Activated CD4-positive, alpha-beta T cell treated with anti-CD3 and anti-CD28 coated beads for 36 hours (primary cell): ENCODE measurements at regions of chr2 and their contacts with region 1.

Region 1: GRCh38 chr2:27428213-27428977 is at the start of gene NRBP1:
- DNase-seq: peak; percentile 97
- ATAC-seq: peak; percentile 85
- H3K4me3 Mint-ChIP-seq: peak within 1 kb of the TSS; percentile 100
- H3K27ac Mint-ChIP-seq: peak within 1 kb of the TSS; percentile 98
- H3K4me1 Mint-ChIP-seq: peaks cover 37% of the 10 kb centered on the region
- H3K27me3 Mint-ChIP-seq: no peaks in the 10 kb centered on the region
- total RNA-seq, gene NRBP1: 74.3 to 74.4 TPM

Region 2: GRCh38 chr2:27380626-27381545 is 47.5 kb before region 1 on chr2 and contains the start of gene ZNF513:
- CTCF ChIA-PET with region 1: interaction called, 9 read pairs
- POLR2A ChIA-PET with region 1: interaction called, 3 read pairs
- intact Hi-C with region 1: loop called in 1 of 2 experiments (anchors 1 kb)
- DNase-seq: peak; percentile 95
- ATAC-seq: peak; percentile 91
- H3K4me3 Mint-ChIP-seq: peak within 1 kb of the TSS; percentile 89
- H3K27ac Mint-ChIP-seq: peak within 1 kb of the TSS; percentile 96
- H3K4me1 Mint-ChIP-seq: peaks cover 29% of the 10 kb centered on the region
- H3K27me3 Mint-ChIP-seq: no peaks in the 10 kb centered on the region
- total RNA-seq, gene ZNF513: 7.7 to 10.5 TPM

Region 3: GRCh38 chr2:27628767-27629709 is 200.6 kb after region 1 on chr2 and contains the starts of genes CCDC121 and GPN1:
- CTCF ChIA-PET with region 1: interaction called, 6 read pairs
- POLR2A ChIA-PET with region 1: no interaction called
- intact Hi-C with region 1: loop called (anchors 1 to 2 kb)
- DNase-seq: peak; percentile 98
- ATAC-seq: peak; percentile 96
- H3K4me3 Mint-ChIP-seq: no peak within 1 kb of the TSS
- H3K27ac Mint-ChIP-seq: no peak within 1 kb of the TSS
- H3K4me1 Mint-ChIP-seq: peaks cover 37% of the 10 kb centered on the region
- H3K27me3 Mint-ChIP-seq: no peaks in the 10 kb centered on the region
- total RNA-seq, gene CCDC121: 0.11 to 0.44 TPM
- total RNA-seq, gene GPN1: 45.6 to 63.9 TPM

Region 4: DNA sequence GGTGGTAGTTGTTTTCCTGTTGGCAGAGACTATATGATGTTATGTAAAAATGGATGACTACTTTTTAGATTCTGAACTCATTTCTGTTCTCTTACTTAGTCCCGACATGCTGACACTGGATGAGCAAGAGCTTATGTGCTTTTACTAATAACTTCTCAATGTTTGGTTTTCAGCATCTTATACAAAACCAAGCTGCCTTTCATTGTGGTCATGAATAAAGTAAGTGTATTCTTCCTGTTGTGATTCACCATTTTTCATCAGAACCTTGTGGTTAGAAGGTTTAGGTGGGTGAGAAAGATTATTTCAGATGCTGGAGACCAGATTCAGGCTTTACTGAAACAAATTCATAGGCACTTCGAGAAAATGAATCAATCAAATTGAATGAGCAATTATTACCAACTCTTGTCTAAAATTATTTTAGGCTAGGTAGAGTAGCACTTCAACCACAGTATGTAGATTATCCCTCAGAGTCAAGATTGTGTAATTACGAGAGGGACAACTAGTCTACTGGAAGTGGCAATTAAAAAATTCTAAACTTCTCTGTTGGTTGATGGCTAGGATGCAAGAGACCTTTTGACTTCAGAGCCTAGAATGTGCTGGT is 209.7 kb after region 1 on chr2:
- CTCF ChIA-PET with region 1: no interaction called
- POLR2A ChIA-PET with region 1: no interaction called
- intact Hi-C with region 1: loop called in 1 of 2 experiments (anchors 2 kb)
- DNase-seq: peak; percentile 31
- ATAC-seq: peak; percentile 88
- H3K4me3 Mint-ChIP-seq: peak overlapping the region; percentile 50
- H3K27ac Mint-ChIP-seq: peak overlapping the region; percentile 95
- H3K4me1 Mint-ChIP-seq: peaks cover 38% of the 10 kb centered on the region
- H3K27me3 Mint-ChIP-seq: no peaks in the 10 kb centered on the region

Region 5: GRCh38 chr2:27663463-27664249 is 235.3 kb after region 1 on chr2 and contains the starts of genes SLC4A1AP and SUPT7L:
- CTCF ChIA-PET with region 1: interaction called, 3 read pairs
- POLR2A ChIA-PET with region 1: no interaction called
- intact Hi-C with region 1: loop called in 1 of 2 experiments (anchors 1 kb)
- DNase-seq: peak; percentile 80
- ATAC-seq: peak; percentile 81
- H3K4me3 Mint-ChIP-seq: peak within 1 kb of the TSS; percentile 98
- H3K27ac Mint-ChIP-seq: peak within 1 kb of the TSS; percentile 100
- H3K4me1 Mint-ChIP-seq: peaks cover 42% of the 10 kb centered on the region
- H3K27me3 Mint-ChIP-seq: no peaks in the 10 kb centered on the region
- total RNA-seq, gene SLC4A1AP: 23.8 to 25.3 TPM
- total RNA-seq, gene SUPT7L: 23.7 to 26.1 TPM

Region 6: GRCh38 chr2:27771548-27772335 is 343.3 kb after region 1 on chr2 and contains the start of gene MRPL33:
- CTCF ChIA-PET with region 1: no interaction called
- POLR2A ChIA-PET with region 1: no interaction called
- intact Hi-C with region 1: no loop called
- DNase-seq: peak; percentile 96
- ATAC-seq: peak; percentile 98
- H3K4me3 Mint-ChIP-seq: peak within 1 kb of the TSS; percentile 99
- H3K27ac Mint-ChIP-seq: peak within 1 kb of the TSS; percentile 99
- H3K4me1 Mint-ChIP-seq: peaks cover 42% of the 10 kb centered on the region
- H3K27me3 Mint-ChIP-seq: no peaks in the 10 kb centered on the region
- total RNA-seq, gene MRPL33: 44.7 to 68.0 TPM